Kidney (tissue), 22 donors: ENCODE measurements at regions of chr6 and their contacts with region 1.

Region 1: GRCh38 chr6:129248946-129249345 is 366.0 kb downstream of the LAMA2 start:
- DNase-seq: no peak
- H3K4me3 ChIP-seq: no peak overlapping the region
- H3K27ac ChIP-seq: no peak overlapping the region
- H3K4me1 ChIP-seq: no peaks in the 10 kb centered on the region
- H3K27me3 ChIP-seq: no peaks in the 10 kb centered on the region
- CTCF ChIP-seq: no peak

Region 2: GRCh38 chr6:128807577-128807976 is 441.4 kb before region 1 on chr6:
- intact Hi-C with region 1: loop called (anchors 10 kb)
- DNase-seq: peak in 2 of 5 donors; percentile 41 to 60
- H3K4me3 ChIP-seq: no peak overlapping the region
- H3K27ac ChIP-seq: no peak overlapping the region
- H3K4me1 ChIP-seq: no peaks in the 10 kb centered on the region
- H3K27me3 ChIP-seq: no peaks in the 10 kb centered on the region
- CTCF ChIP-seq: no peak